Ascending aorta (tissue), 2 donors: ENCODE measurements at regions of chr7 and their contacts with region 1.

Region 1: GRCh38 chr7:132580717-132581285 is 4.5 kb upstream of the PLXNA4 start:
- DNase-seq: peak in 1 of 2 donors; percentile 82
- H3K4me3 ChIP-seq: no peak overlapping the region
- H3K27ac ChIP-seq: no peak overlapping the region
- H3K4me1 ChIP-seq: peaks cover 0 to 9% of the 10 kb centered on the region in 2 donors
- H3K27me3 ChIP-seq: no peaks in the 10 kb centered on the region
- CTCF ChIP-seq: peak; percentile 73 to 79 (median 74)

Region 2: DNA sequence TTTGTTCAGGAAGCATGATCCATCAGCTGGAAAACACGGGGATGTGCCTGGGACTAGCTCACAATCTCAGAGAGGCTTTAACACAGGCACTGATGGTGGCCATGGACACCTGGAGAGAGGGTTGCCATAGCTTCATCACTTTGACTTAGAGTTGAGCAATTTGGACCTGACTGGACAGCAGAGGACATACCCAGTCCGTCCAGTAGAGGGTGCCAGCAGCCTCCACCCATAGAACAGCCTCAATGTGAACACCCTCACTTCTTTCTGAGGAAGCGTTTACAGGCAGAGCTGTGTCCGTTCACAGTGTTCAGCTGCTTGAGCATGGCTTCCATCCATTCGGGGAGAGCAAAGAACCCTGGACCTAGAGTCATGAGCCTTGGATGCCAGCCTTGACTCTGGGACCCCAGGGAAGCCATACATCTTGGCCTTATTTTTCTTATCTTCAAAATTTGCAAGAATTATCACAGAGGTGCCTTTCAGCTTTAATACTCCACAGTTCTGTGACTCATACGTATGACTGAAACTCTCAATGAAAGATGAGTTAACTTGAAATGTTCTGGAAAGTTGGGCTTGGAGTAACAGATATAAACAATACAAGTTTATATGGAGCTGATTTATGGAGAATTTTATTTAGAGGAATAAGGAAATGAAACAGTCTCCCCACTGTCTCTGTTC is 721.5 kb before region 1 on chr7:
- intact Hi-C with region 1: loop called (anchors 2 kb)
- DNase-seq: peak in 1 of 2 donors; percentile 76
- H3K4me3 ChIP-seq: no peak overlapping the region
- H3K27ac ChIP-seq: no peak overlapping the region
- H3K4me1 ChIP-seq: peaks cover 0 to 2% of the 10 kb centered on the region in 2 donors
- H3K27me3 ChIP-seq: no peaks in the 10 kb centered on the region
- CTCF ChIP-seq: peak; percentile 49 to 78 (median 65)

Region 3: GRCh38 chr7:132145466-132145865 is 435.3 kb before region 1 on chr7:
- intact Hi-C with region 1: loop called (anchors 5 kb)
- DNase-seq: peak; percentile 51 to 88
- H3K4me3 ChIP-seq: no peak overlapping the region
- H3K27ac ChIP-seq: peak overlapping the region; percentile 60 to 66
- H3K4me1 ChIP-seq: peaks cover 0 to 23% of the 10 kb centered on the region in 2 donors
- H3K27me3 ChIP-seq: no peaks in the 10 kb centered on the region
- CTCF ChIP-seq: peak in 2 of 3 experiments; percentile 8 to 30

Region 4: DNA sequence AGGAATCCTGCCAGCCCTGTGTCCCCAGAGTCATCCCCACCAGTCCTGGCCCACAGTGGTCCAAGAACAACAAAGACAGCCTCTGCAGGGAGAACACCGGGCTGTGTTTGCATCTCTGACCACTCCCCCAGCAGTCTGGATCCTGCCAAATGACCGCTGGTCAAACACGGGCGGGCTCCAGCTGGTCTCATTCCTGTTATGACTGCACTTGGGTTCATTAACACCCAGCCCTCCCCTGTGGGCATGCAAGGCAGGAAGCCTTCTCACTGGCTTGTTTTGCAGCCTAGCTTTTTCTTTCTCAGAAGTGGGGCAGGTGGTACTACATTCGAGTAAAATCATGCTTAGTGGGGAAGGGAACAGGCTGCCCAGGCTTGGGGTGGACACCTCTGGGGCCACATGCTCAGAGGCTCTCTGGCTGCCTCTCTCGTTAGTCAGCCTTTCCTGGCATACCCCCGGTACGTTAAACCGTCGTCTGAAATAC is 194.6 kb before region 1 on chr7:
- intact Hi-C with region 1: loop called (anchors 5 kb)
- DNase-seq: peak; percentile 51 to 89
- H3K4me3 ChIP-seq: peak overlapping the region in 1 of 2 donors; percentile 9
- H3K27ac ChIP-seq: peak overlapping the region; percentile 63 to 69
- H3K4me1 ChIP-seq: peaks cover 0 to 17% of the 10 kb centered on the region in 2 donors
- H3K27me3 ChIP-seq: no peaks in the 10 kb centered on the region
- CTCF ChIP-seq: no peak

Region 5: DNA sequence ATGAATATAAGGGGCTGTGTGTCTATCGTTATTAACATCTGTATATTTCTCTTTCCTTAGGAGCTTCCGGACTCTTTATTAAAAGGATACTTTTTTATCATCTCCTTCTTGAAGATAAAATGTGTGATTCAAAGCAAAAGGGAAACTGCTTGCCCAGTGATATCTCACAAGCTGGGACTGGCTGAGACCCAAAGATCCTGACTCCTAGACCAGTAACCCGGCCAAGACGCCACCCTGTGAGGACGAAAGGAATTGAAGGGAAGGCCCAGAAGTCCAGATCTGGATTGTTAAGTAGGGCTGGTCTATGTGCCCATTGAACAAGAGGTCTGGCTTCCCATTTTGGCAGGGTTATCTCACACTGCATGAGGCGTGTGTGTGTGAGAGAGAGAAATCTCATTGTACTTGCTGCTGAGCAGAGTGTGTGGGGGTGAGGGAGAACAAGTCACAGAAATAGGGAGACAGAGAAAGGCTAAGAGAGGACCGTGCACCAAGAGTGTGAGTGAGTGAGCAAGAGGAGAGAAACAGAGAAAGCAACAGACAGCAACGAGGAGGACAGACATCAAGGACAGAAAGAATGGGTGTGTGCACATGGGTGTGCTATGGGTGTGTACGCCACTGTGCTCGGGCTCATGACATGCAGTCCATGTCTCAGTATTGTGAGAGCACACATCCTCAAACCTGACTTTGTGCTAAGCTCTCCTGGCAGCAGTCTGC is 79.9 kb before region 1 on chr7:
- intact Hi-C with region 1: loop called (anchors 2 kb)
- DNase-seq: peak in 1 of 2 donors; percentile 86
- H3K4me3 ChIP-seq: no peak overlapping the region
- H3K27ac ChIP-seq: no peak overlapping the region
- H3K4me1 ChIP-seq: peaks cover 0 to 8% of the 10 kb centered on the region in 2 donors
- H3K27me3 ChIP-seq: no peaks in the 10 kb centered on the region
- CTCF ChIP-seq: peak; percentile 58 to 66 (median 64)

Region 6: GRCh38 chr7:132683896-132684686 is 103.3 kb after region 1 on chr7:
- intact Hi-C with region 1: no loop called
- DNase-seq: no peak
- H3K4me3 ChIP-seq: no peak overlapping the region
- H3K27ac ChIP-seq: no peak overlapping the region
- H3K4me1 ChIP-seq: no peaks in the 10 kb centered on the region
- H3K27me3 ChIP-seq: no peaks in the 10 kb centered on the region
- CTCF ChIP-seq: no peak

Region 7: DNA sequence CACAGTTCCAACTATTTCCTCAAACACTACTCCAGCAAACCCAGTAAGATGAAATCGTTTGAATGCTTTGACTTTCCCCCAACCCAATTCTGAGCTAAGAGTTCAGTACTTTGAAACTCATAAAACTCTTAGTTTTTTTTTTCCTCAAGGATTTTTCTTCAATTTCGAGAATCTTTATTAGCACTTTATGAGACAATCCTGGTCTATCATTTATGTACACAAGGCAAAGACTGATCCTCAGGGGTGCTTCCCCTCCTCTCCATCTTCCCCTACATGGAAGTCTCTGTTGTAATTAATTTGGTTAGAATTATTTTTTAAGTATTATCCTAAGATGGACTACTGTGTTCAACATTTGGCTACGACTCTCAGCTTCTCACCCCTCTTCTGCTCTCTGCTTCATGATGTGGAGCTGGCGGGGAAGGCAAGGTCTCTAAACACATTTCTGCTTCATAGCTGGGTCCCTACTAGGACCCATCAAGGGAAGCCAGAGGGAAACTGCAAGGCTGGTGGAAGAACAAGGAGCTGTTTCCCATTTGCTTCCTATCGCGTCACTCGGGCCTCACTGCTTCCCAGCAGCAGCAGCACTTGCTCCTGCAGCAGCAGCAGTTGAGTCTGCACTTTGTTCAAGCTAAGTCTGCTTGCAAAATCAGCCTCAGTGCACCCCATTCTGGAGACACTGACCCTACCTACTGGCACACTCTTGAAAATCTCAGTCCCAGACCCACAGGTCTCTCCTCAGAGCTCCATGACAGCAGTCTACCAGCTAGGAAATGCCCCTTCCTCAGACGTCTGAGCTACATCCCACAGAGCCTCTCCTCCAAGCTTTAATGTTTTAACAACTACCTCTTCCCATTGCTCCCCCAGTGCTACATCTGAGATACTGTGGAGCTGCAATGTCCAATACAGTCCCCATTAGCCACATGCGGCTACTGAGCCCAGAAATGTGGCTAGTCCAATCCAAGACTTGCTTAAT is 411.1 kb after region 1 on chr7:
- intact Hi-C with region 1: no loop called
- DNase-seq: no peak
- H3K4me3 ChIP-seq: no peak overlapping the region
- H3K27ac ChIP-seq: no peak overlapping the region
- H3K4me1 ChIP-seq: no peaks in the 10 kb centered on the region
- H3K27me3 ChIP-seq: no peaks in the 10 kb centered on the region
- CTCF ChIP-seq: no peak